ENCODE measurements at regions of chr21 and their contacts with region 1.

Region 1: DNA sequence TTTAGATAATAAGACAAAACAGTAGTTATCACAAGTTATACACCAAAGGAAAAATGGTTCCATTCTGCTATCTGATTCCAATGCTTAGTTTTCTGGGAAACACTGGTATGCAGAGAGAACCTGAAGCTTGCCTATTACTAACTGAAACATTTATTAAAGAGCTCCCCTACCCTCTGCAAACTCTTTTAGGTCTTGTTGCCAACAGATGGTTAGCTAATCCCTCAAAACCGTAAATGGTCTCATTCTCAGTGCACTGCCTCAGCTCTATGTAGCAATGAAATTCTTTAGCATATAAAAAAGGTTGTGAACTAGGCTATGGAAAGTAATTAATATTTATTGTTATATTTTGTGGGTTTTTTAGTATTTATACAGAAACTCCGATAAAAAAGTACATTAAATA is 20.4 kb downstream of the C21orf91 start:
- DNase-seq: no peak
- ATAC-seq: no peak
- H3K4me3 Mint-ChIP-seq: no peak overlapping the region
- H3K27ac Mint-ChIP-seq: peak overlapping the region; percentile 52
- H3K4me1 Mint-ChIP-seq: peaks cover 51% of the 10 kb centered on the region
- H3K27me3 Mint-ChIP-seq: no peaks in the 10 kb centered on the region

Region 2: GRCh38 chr21:17813353-17813752 is 14.6 kb after region 1 on chr21:
- CTCF ChIA-PET with region 1: interaction called, 11 read pairs
- DNase-seq: no peak
- ATAC-seq: no peak
- H3K4me3 Mint-ChIP-seq: no peak overlapping the region
- H3K27ac Mint-ChIP-seq: no peak overlapping the region
- H3K4me1 Mint-ChIP-seq: peaks cover 49% of the 10 kb centered on the region
- H3K27me3 Mint-ChIP-seq: no peaks in the 10 kb centered on the region

Measured in activated CD8-positive, alpha-beta memory T cell treated with anti-CD3 and anti-CD28 coated beads, Interleukin-2, amount 10 ng/mL, durations not matched to agents 7 days and 5 days (primary cell).